ENCODE measurements at regions of chr9 and their contacts with region 1.

Region 1: DNA sequence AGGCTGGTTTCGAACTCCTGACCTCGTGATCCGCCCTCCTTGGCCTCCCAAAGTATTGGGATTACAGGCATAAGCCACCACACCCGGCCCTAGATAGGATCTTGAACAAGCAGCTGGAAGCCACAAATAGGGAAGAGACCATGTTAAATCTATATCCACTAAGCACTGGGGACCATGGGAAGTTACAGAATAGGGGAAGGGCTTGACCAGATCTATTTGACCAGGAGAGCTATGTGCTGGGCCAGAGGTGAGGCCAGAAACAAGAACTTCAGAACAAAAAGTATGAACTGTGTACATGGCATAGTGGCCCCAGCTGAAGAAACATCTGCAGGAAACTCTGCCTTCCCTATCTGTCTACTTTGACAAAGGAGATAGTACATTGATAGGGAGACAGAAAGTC is 10.8 kb downstream of the KLF4 start:
- DNase-seq: no peak
- ATAC-seq: no peak
- H3K4me3 ChIP-seq: no peak overlapping the region
- H3K27ac ChIP-seq: no peak overlapping the region
- H3K4me1 ChIP-seq: no peaks in the 10 kb centered on the region
- H3K27me3 ChIP-seq: no peaks in the 10 kb centered on the region
- CTCF ChIP-seq: no peak

Region 2: DNA sequence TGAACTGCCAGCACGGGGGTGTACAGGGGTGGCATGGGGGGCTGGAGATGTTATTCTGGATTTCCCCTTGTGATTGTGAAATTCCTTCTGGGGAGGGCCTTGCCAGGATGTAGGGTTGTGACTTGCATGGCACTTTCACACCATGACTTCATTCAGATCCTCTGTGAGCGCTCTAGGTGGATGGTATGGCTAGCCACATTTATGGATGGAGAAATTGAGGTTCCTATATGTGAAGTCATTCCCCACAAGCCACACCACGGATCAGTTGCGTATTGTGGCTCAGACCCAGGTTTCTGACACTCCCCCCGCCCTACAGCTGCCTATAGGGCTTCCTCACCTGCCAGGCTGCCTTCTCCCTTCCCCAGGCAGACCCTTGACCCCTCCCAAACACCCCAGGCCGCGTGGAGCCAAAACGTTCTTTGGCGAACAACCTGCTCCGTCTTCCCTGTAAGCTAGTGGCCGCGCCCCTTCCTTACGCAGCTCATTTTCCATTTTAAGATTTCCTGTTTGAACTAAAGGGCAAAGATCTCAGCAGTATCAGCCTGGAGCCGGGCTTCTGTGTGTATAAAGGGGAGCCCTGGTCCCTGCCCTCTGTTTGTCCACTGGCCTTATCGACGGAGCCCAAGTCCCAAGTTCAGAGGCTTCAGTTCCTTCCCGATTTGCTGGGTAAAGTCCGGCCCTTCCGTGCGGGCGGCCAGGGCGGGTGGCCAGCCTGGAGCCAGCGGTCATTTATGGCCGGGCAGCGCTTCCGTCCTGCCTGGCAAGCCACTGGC is 108.6 kb after region 1 on chr9:
- intact Hi-C with region 1: no loop called
- DNase-seq: peak; percentile 40 to 69 (median 52)
- ATAC-seq: peak; percentile 74 to 86 (median 84)
- H3K4me3 ChIP-seq: peak overlapping the region in 3 of 4 donors; percentile 10 to 35 (median 26)
- H3K27ac ChIP-seq: peak overlapping the region in 2 of 4 donors; percentile 43 to 50
- H3K4me1 ChIP-seq: peaks cover 0 to 5% (median 0%) of the 10 kb centered on the region in 3 donors
- H3K27me3 ChIP-seq: no peaks in the 10 kb centered on the region
- CTCF ChIP-seq: no peak

Region 3: DNA sequence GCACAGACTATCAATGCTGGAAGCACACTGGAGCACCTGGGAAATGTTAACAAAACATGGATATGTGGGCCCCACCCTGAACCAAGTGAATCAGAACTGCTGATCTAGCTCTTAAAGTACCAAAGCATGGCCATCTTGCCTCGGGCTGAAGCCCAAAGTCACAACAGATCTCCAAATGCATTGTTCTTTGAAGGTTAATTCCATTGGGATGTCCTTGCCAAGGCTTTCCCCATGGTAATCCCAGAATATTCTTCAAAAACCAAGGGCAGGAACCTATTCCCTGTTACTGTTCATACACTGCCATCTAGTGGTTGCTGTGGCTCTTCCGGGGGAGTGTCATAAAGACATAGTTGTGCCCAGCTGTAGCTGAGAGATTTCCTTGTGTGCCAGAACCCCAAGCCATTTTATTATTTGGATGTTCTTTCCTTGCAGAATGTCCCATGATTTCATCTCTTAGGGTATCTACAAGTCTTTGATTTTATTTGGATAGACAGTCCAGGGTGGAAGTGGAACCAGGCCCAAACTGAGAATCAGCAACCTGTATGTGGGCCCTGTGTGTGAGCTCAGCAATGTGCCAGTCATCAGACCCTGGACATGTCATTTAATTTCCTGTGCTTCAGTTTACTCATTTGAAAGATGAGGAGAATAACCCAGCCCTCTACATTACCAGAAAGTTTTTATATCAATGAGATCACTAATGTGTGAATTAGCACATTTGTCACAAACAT is 1087.0 kb after region 1 on chr9:
- intact Hi-C with region 1: loop called in 1 of 3 experiments (anchors 5 kb)
- DNase-seq: peak in 4 of 6 donors; percentile 33 to 65 (median 42)
- ATAC-seq: peak; percentile 86 to 100 (median 98)
- H3K4me3 ChIP-seq: no peak overlapping the region
- H3K27ac ChIP-seq: no peak overlapping the region
- H3K4me1 ChIP-seq: no peaks in the 10 kb centered on the region
- H3K27me3 ChIP-seq: no peaks in the 10 kb centered on the region
- CTCF ChIP-seq: peak; percentile 80 to 84 (median 82)

Measured in pancreas (tissue), 10 donors.